Gastrocnemius medialis (tissue), 4 donors: ENCODE measurements at regions of chr20 and their contacts with region 1.

Region 1: DNA sequence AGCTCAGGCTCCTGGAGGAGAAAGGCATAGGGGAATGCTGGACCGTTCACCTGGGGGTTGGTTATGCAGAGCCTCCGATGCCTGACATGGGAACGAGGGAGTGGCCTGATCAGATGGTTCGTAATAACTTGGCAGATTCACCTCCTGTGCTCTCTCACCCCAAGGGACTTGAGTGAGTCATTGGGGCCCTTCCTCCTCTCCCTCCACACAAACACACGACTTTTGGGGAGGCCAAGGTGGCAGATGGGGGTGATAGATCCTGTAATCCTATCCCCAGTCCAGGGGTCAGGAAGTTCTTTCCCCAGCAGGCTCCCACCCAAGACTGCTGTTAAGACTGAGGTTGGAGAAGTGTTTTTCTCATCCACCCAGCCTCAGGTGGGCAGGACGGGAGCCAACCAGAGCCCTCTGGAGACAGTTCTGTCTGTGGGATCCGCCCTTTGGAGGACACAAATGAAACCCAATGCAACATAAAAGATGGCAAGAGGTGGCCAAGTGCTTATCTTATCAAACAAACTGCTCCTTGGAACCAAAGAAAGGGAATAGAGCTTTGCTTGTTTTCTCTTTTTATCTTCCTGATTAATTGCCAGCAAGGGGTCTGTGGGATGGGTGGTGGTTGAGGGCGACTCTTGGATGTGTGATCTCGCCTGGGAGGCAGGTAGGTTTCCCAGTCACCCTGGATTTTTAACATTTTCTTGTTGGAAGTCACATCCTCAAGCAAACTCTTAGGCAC is 45.4 kb upstream of the ARFGEF2 start:
- DNase-seq: peak in 1 of 2 donors; percentile 34
- ATAC-seq: peak in 1 of 2 donors; percentile 51
- H3K4me3 ChIP-seq: no peak overlapping the region
- H3K27ac ChIP-seq: no peak overlapping the region
- H3K4me1 ChIP-seq: peaks cover 0 to 10% of the 10 kb centered on the region in 2 donors
- H3K27me3 ChIP-seq: no peaks in the 10 kb centered on the region
- CTCF ChIP-seq: no peak
- POLR2A ChIP-seq: no peak

Region 2: DNA sequence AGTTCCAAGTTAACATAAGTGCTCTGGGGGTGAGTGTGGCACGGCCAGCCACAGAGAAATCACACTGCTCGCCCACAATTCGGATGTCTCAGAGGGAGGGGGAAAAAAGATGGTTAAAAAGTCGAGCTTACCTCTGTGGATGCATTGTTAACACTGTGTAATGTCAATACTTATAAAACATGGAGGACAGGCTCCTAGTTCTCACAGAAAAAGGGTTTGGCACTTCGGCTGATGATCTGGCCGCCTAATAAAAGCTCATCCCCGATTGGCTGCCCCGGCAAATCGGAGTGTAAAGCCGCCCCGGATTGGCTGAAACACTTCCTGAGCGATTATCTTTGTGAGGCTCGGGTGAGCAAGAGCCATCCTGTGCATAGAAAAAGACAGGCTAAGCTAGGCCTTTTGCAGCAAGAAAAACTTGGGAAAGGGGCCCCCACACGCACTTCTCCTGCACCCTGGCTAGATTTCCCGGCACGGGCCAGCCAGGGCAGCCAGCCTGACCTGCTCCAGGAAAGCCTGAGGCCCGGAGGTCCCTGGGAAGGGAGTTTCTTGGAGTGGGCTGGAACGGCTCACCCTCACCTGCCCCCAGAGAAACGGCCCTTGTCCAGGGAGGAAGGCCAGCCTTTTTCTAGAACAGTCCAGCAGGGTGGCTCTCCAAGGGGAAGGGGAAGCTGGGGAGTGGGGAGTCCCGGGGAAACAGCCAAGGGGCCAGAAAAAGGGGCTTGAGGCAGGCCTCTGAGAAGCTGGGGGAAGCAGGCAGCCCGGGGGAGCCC is 1519.4 kb before region 1 on chr20 and contains the start of gene ZMYND8:
- in situ Hi-C with region 1: no loop called
- intact Hi-C with region 1: loop called (anchors 5 kb)
- DNase-seq: peak; percentile 86 to 96
- ATAC-seq: peak; percentile 41 to 46
- H3K4me3 ChIP-seq: peak within 1 kb of the TSS; percentile 28 to 52 (median 44)
- H3K27ac ChIP-seq: peak within 1 kb of the TSS; percentile 96 to 100 (median 97)
- H3K4me1 ChIP-seq: peaks cover 97 to 99% of the 10 kb centered on the region in 2 donors
- H3K27me3 ChIP-seq: no peaks in the 10 kb centered on the region
- CTCF ChIP-seq: no peak
- POLR2A ChIP-seq: peak; percentile 14 to 57
- total RNA-seq, gene ZMYND8: 15.1 to 32.2 (median 19.7) TPM

Region 3: DNA sequence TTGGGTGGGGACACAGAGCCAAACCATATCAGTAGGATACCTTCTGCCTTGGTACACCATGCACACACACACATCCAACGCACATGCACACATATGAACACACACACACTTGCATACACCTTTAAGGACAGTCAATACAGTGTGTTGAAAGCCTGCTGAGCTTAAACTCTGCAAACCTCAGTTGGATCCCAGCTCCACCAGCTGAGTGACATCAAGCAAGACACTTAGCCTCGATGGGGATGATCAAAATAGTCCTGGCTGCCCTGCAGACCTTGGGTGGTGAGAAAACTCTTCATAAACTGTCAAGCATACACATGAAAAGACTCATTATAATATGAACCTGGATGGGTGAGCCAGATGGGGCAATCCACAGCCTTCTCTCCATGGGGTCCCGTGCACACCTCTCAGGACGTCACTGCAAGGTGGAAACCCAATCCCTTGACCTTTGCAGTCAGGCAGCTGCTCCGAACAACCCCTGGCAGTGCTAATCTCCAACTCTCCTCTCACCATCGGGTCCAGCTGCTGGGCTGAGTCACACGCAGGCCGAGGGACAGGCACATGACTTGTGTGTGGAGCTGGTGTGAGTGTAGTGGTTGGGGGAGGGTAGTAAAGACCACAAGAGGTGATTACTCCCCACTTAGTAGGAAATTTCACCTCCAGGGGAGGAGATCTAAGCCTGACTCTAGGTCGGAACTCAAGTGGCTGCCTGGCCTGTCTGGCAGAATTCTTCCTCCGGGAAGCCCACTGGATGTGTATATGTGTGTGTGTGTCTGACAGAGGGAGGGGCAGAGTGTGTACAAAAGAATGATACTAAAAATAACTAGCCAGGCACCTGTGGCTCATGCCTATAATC is 22.3 kb before region 1 on chr20:
- in situ Hi-C with region 1: no loop called
- intact Hi-C with region 1: loop called (anchors 2 kb)
- DNase-seq: peak; percentile 78 to 94
- ATAC-seq: peak; percentile 91 to 93
- H3K4me3 ChIP-seq: no peak overlapping the region
- H3K27ac ChIP-seq: peak overlapping the region; percentile 79 to 91 (median 84)
- H3K4me1 ChIP-seq: peaks cover 0 to 24% of the 10 kb centered on the region in 2 donors
- H3K27me3 ChIP-seq: no peaks in the 10 kb centered on the region
- CTCF ChIP-seq: no peak
- POLR2A ChIP-seq: no peak

Region 4: DNA sequence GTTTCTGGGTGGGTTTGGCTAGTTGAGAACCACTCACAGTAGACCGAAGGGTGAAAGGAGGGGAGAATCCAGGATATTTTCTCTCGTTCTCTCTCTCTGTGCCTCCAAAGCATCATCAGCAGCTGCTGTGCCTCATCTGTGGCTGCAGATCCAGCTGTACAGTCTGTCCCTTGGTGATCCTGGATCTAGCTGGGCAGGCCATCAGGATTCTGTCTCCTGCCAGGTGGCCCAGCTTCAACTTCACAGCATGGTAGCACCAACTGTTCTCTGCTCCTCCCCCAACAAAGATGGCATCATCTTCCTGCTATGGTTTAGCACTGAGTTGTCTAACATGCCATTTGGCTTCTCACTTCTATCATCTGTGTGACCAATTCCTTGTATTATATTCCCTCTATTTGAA is 16.8 kb after region 1 on chr20:
- in situ Hi-C with region 1: no loop called
- intact Hi-C with region 1: loop called (anchors 2 kb)
- DNase-seq: peak; percentile 75 to 91
- ATAC-seq: peak; percentile 87 to 90
- H3K4me3 ChIP-seq: no peak overlapping the region
- H3K27ac ChIP-seq: peak overlapping the region; percentile 68 to 87 (median 80)
- H3K4me1 ChIP-seq: peaks cover 4 to 16% of the 10 kb centered on the region in 2 donors
- H3K27me3 ChIP-seq: no peaks in the 10 kb centered on the region
- CTCF ChIP-seq: no peak
- POLR2A ChIP-seq: no peak